Psoas muscle (tissue), 8 donors: ENCODE measurements at regions of chr17 and their contacts with region 1.

Region 1: DNA sequence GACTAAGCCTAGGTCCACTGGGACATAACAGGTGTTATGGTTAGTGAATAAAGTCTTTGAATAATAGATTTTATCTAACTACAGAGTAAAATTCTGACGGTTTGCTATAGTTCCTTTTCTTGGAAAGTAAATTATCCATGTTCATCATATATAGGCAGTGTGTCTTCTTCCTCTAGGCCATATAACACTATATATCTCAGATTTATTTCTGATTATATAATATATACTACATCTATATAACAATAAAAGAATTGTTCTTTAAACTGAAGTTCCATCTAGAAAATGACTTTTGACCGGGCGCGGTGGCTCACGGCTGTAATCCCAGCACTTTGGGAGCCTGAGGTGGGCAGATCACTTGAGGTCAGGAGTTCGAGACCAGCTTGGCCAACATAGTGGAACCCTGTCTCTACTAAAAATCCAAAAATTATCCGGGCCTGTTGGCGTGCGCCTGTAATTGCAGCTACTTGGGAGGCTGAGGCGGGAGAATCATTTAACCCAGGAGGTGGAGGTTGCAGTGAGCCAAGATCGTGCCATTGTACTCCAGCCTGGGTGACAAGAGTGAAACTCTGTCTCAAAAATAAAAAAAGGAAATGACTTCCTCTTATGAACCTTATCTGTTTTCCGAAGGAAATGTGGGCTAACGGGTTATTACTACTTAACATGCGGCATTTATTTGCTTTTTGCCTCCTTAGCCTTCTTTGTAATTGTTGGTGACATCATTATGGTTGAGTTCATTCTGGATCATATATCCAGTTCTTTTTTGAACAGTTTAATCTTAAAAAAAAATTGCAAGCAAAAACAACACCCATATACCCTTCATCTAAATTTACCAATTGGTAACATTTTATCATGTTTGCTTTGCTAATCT is 29.2 kb downstream of the NOL11 start:
- DNase-seq: no peak
- ATAC-seq: no peak
- H3K4me3 ChIP-seq: no peak overlapping the region
- H3K27ac ChIP-seq: no peak overlapping the region
- H3K4me1 ChIP-seq: no peaks in the 10 kb centered on the region
- H3K27me3 ChIP-seq: no peaks in the 10 kb centered on the region
- CTCF ChIP-seq: no peak

Region 2: GRCh38 chr17:67942810-67943209 is 195.9 kb after region 1 on chr17:
- intact Hi-C with region 1: loop called in 1 of 2 experiments (anchors 10 kb)
- DNase-seq: no peak
- ATAC-seq: no peak
- H3K4me3 ChIP-seq: no peak overlapping the region
- H3K27ac ChIP-seq: no peak overlapping the region
- H3K4me1 ChIP-seq: no peaks in the 10 kb centered on the region
- H3K27me3 ChIP-seq: no peaks in the 10 kb centered on the region
- CTCF ChIP-seq: peak; percentile 29